ENCODE measurements at regions of chr4 and their contacts with region 1.

Region 1: DNA sequence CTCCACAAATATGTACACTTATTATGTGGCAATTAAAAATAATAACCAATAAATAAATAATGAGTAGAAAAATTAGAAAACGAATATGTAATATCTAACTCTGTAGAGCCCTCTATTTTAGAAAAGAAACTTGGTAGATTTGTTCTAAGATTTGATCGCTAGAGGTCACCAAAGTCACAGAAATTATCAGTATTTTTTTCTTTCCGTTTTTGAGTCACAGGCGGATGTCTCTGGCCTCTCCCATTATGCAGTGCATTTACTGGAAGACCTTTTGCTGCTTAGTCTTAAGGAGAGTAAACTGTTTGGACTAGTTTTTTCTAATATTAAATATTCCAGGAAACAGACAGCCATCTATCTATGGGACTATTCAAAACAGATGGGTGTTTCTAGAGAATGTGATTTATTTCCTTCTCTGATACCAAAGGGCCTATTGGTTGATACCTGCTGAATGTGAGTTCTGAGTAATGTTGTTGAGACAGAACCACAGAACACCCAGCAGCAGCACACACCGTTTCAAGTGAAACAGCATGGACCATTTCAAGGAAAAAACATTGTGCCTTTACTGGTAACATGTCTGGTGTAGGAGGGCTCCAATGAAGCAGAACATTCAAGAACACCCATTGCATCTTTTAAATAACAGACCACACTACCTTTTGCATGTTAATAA is 34.0 kb upstream of the GYPA start:
- DNase-seq: peak; percentile 78
- H3K4me3 Mint-ChIP-seq: peak overlapping the region; percentile 45
- H3K27ac Mint-ChIP-seq: peak overlapping the region; percentile 86
- H3K4me1 Mint-ChIP-seq: peaks cover 19% of the 10 kb centered on the region
- H3K27me3 Mint-ChIP-seq: peaks cover 10% of the 10 kb centered on the region

Region 2: GRCh38 chr4:144787365-144788258 is 613.1 kb after region 1 on chr4:
- intact Hi-C with region 1: loop called (anchors 1 kb)
- DNase-seq: no peak
- H3K4me3 Mint-ChIP-seq: no peak overlapping the region
- H3K27ac Mint-ChIP-seq: no peak overlapping the region
- H3K4me1 Mint-ChIP-seq: no peaks in the 10 kb centered on the region
- H3K27me3 Mint-ChIP-seq: peaks cover 4% of the 10 kb centered on the region

Region 3: DNA sequence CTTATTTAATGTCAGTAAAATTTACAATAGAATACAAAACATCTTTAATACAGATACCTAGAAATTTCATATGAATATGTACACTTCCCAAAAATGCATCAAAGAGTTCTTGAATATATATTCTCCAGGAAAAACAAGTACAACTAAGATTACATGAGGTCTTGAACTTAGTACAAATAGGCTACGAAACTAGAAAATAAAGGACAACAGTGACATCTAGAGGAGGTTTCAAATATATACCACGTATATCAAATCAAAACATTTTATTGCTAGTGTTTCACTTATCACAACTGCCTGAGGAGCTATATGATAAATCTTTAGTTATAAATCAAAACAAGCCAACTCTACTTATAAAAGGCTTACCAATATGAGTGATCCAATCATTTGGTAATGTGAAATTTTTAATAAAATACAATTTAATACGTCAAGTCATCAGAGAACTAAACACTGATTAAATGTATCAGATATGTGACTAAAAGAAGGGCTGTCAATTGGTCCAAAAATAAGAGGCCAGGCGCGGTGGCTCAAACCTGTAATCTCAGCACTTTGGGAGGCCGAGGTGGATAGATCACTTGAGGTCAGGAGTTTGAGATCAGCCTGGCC is 886.9 kb after region 1 on chr4:
- intact Hi-C with region 1: loop called (anchors 1 kb)
- DNase-seq: no peak
- H3K4me3 Mint-ChIP-seq: no peak overlapping the region
- H3K27ac Mint-ChIP-seq: no peak overlapping the region
- H3K4me1 Mint-ChIP-seq: peaks cover 20% of the 10 kb centered on the region
- H3K27me3 Mint-ChIP-seq: no peaks in the 10 kb centered on the region

Region 4: GRCh38 chr4:145097821-145098674 is 923.5 kb after region 1 on chr4 and contains the starts of genes ABCE1 and ANAPC10:
- intact Hi-C with region 1: loop called (anchors 1 kb)
- DNase-seq: peak; percentile 99
- H3K4me3 Mint-ChIP-seq: peak within 1 kb of the TSS; percentile 96
- H3K27ac Mint-ChIP-seq: peak within 1 kb of the TSS; percentile 99
- H3K4me1 Mint-ChIP-seq: peaks cover 24% of the 10 kb centered on the region
- H3K27me3 Mint-ChIP-seq: no peaks in the 10 kb centered on the region
- total RNA-seq, gene ABCE1: 191 and 194 TPM in 2 replicates
- total RNA-seq, gene ANAPC10: 26.7 and 30.4 TPM in 2 replicates

Region 5: DNA sequence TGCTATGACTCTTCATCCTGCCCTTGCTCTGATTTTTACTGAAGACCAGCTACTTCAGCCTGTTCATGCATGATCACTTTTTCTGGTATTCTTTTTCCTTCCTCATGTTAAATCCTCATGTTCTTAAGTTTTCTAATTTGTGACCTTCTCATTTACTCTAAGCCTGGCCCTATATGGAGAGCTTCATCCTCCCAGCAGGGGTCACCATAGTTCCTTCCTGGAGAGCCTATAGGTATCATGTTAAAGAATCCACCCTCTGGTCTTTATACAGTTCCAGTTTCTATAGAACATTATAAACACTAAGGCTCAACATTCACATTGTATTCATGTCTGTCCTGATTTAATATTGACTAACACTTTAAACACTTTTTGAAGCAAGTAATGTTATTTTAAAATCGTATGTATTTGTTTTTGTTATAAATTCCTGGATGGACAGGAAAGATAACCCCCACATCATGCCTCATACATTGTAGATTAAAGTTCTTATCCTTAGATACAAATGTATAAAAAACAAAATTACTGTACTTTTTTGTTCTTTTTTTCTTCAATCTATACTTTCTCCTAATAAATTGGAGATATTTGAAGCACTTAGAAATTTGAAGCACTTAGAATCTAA is 1059.7 kb after region 1 on chr4:
- intact Hi-C with region 1: loop called (anchors 10 kb)
- DNase-seq: peak; percentile 85
- H3K4me3 Mint-ChIP-seq: no peak overlapping the region
- H3K27ac Mint-ChIP-seq: no peak overlapping the region
- H3K4me1 Mint-ChIP-seq: no peaks in the 10 kb centered on the region
- H3K27me3 Mint-ChIP-seq: peaks cover 14% of the 10 kb centered on the region

Region 6: DNA sequence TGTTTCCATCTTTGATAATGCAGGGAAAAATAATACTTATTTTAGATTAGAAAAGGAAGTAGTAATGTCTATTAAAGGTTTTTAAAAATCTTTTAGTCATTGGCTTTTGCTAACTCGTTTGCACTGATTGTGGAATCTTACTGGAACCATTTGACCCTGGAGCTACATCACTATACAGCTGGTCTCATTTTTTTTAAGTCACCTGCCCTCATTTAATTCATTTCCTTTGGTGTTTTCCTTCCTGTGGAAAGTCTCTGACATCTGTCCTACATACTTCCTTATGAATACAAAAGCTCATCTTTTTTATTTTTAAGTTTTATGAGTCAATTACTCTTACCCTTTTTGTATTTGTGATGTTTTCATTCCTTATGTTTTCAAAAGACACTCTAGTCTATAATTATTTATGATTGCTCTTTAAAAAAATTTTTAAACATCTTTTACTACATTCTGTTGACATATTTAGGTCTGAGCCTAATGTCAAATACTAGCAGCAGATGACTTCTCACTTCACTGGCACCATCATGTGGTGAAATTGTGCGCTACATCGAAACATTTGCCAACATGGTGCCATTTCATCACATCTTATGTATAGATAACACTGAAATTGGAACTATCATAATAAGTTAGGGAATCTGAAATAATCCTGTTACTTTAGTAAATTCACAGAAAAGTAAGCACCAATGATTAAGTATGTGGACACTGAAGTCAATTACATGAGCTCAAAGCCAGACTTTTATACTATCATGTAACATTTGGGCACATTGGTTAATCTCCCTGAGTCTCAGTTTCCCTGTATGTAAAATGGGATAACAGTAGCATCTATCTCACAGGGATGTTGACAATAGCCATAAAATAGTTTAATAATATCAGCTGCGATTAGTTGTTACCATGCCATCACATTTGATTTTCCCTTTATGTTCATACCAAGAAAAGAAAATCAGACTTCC is 1435.2 kb after region 1 on chr4:
- intact Hi-C with region 1: loop called (anchors 5 kb)
- DNase-seq: peak; percentile 89
- H3K4me3 Mint-ChIP-seq: no peak overlapping the region
- H3K27ac Mint-ChIP-seq: no peak overlapping the region
- H3K4me1 Mint-ChIP-seq: peaks cover 7% of the 10 kb centered on the region
- H3K27me3 Mint-ChIP-seq: peaks cover 12% of the 10 kb centered on the region